Caco-2 (cell line): ENCODE measurements at regions of chr7 and their contacts with region 1.

Region 1: DNA sequence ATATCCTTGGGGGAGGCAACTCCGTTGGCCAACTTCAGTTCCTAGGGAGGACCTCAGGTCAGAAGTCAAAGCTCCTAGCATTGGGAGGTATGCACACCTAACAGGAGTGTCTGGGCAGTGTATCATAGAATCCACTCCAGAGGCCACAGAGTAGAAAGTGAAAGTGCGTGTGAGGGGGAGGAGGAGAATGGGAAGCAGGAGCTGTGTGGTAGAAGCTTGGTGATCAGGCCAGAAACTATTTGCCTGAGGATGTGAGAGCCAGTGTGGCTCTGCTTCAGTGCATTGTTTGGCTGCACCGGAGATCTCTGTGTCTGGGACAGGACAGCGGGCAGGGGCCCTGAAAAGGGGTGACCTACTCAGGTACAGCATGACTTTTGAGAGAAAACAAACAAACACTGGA is 557.4 kb upstream of the VSTM2A start:
- DNase-seq: no peak
- H3K4me3 ChIP-seq: no peak overlapping the region
- H3K4me3 Mint-ChIP-seq: no peak overlapping the region
- H3K27ac Mint-ChIP-seq: no peak overlapping the region
- H3K4me1 ChIP-seq: no peaks in the 10 kb centered on the region
- H3K4me1 Mint-ChIP-seq: no peaks in the 10 kb centered on the region
- H3K27me3 ChIP-seq: no peaks in the 10 kb centered on the region
- H3K27me3 Mint-ChIP-seq: peaks cover 2% of the 10 kb centered on the region
- CTCF ChIP-seq: no peak

Region 2: GRCh38 chr7:53229202-53229601 is 755.6 kb before region 1 on chr7:
- CTCF ChIA-PET with region 1: no interaction called
- POLR2A ChIA-PET with region 1: no interaction called
- intact Hi-C with region 1: no loop called
- DNase-seq: no peak
- H3K4me3 ChIP-seq: no peak overlapping the region
- H3K4me3 Mint-ChIP-seq: no peak overlapping the region
- H3K27ac Mint-ChIP-seq: no peak overlapping the region
- H3K4me1 ChIP-seq: 0 out of 2 replicates have a peak, but pooled peaks cover 6% of the 10 kb centered on the region
- H3K4me1 Mint-ChIP-seq: no peaks in the 10 kb centered on the region
- H3K27me3 ChIP-seq: no peaks in the 10 kb centered on the region
- H3K27me3 Mint-ChIP-seq: no peaks in the 10 kb centered on the region
- CTCF ChIP-seq: no peak

Region 3: DNA sequence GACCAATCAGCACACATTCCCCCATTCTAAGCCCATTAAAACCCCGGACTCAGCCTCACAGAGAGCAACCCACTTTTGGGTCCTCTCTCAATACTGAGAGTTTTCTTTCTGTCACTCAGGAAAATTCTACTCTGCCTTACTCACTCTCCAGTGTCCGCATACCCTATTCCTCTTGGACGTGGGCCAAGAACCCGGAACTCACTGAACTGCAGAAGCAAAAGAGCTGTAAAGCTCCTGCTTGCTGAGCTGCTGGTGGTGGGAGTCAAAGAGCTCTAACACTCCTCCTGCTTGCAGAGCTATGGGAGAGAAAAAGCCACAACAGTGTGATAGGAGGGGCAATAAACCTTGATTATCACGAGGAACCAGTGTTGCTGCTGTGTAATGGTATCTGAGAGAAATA is 562.5 kb before region 1 on chr7:
- CTCF ChIA-PET with region 1: no interaction called
- POLR2A ChIA-PET with region 1: no interaction called
- intact Hi-C with region 1: no loop called
- DNase-seq: no peak
- H3K4me3 ChIP-seq: no peak overlapping the region
- H3K4me3 Mint-ChIP-seq: no peak overlapping the region
- H3K27ac Mint-ChIP-seq: no peak overlapping the region
- H3K4me1 ChIP-seq: no peaks in the 10 kb centered on the region
- H3K4me1 Mint-ChIP-seq: no peaks in the 10 kb centered on the region
- H3K27me3 ChIP-seq: no peaks in the 10 kb centered on the region
- H3K27me3 Mint-ChIP-seq: no peaks in the 10 kb centered on the region
- CTCF ChIP-seq: no peak

Region 4: GRCh38 chr7:54469740-54470139 is 485.0 kb after region 1 on chr7:
- CTCF ChIA-PET with region 1: no interaction called
- POLR2A ChIA-PET with region 1: no interaction called
- intact Hi-C with region 1: loop called (anchors 5 kb)
- DNase-seq: no peak
- H3K4me3 ChIP-seq: no peak overlapping the region
- H3K4me3 Mint-ChIP-seq: no peak overlapping the region
- H3K27ac Mint-ChIP-seq: no peak overlapping the region
- H3K4me1 ChIP-seq: no peaks in the 10 kb centered on the region
- H3K4me1 Mint-ChIP-seq: peaks cover 10% of the 10 kb centered on the region
- H3K27me3 ChIP-seq: no peaks in the 10 kb centered on the region
- H3K27me3 Mint-ChIP-seq: peaks cover 8% of the 10 kb centered on the region
- CTCF ChIP-seq: no peak